Ascending aorta (tissue), 2 donors: ENCODE measurements at regions of chr6 and their contacts with region 1.

Region 1: DNA sequence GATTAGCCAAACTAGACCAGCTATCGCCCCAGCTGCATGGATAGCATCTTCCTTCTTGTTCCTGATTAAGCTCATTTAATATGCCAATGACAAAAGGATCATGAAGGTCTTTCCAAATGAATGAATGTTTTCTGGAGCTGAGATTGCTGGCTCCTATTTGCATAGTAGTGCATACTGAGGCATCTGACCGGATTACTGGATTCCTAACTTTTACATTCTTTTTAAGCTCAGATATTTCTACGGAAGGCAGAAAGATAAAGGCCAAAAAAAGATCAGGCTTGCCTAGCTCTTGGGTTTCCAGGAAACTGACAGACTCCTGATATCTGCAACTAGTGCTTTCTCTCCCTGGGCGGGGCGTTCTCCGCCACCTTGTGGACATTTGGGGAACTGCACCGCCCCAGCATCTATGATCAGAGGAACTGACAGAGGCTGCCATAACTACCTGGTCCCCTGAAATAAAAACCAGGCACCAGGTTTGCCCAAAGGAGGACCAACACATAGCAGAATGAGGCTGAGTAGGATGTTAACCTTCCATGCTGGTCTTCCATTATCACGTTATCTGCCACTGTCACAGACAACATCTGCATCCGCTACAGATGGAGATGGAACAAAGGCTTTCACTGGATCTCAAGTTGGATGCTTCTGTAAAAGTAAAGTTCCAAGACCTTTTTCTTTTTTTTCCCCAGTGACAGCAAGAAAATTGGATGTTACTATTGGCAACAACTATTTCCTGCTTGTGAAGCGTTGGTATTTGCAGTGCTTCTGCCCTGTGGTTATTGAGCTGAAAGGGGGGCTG is 33.2 kb downstream of the NT5E start:
- DNase-seq: peak; percentile 54 to 92
- H3K4me3 ChIP-seq: peak overlapping the region in 1 of 2 donors; percentile 8
- H3K27ac ChIP-seq: peak overlapping the region; percentile 23 to 65
- H3K4me1 ChIP-seq: peaks cover 0 to 2% of the 10 kb centered on the region in 2 donors
- H3K27me3 ChIP-seq: no peaks in the 10 kb centered on the region
- CTCF ChIP-seq: peak; percentile 91 to 100 (median 99)

Region 2: GRCh38 chr6:85354761-85355618 is 128.1 kb before region 1 on chr6:
- intact Hi-C with region 1: loop called (anchors 1 kb)
- DNase-seq: peak; percentile 13 to 87
- H3K4me3 ChIP-seq: no peak overlapping the region
- H3K27ac ChIP-seq: no peak overlapping the region
- H3K4me1 ChIP-seq: no peaks in the 10 kb centered on the region
- H3K27me3 ChIP-seq: no peaks in the 10 kb centered on the region
- CTCF ChIP-seq: peak; percentile 73 to 97 (median 96)

Region 3: DNA sequence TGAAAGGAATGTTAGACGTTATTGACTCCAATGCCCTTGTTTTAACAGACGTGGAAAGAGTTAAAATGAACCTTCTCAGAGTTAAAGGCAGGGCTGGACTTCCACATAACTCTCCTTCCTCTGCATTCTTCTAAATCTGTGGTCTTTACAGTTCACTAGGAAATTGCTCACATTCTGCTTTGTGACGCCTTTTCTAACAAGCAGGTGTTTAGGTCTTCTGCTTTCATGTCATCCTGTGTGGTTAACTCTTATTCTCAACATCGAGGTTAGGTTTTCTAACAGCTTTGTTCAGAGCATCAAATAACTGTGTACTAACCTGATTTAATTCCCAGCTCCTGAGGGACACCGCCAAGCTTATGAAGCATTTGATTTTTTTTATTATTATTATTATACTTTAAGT is 114.5 kb before region 1 on chr6:
- intact Hi-C with region 1: no loop called
- DNase-seq: no peak
- H3K4me3 ChIP-seq: no peak overlapping the region
- H3K27ac ChIP-seq: no peak overlapping the region
- H3K4me1 ChIP-seq: no peaks in the 10 kb centered on the region
- H3K27me3 ChIP-seq: no peaks in the 10 kb centered on the region
- CTCF ChIP-seq: no peak

Region 4: DNA sequence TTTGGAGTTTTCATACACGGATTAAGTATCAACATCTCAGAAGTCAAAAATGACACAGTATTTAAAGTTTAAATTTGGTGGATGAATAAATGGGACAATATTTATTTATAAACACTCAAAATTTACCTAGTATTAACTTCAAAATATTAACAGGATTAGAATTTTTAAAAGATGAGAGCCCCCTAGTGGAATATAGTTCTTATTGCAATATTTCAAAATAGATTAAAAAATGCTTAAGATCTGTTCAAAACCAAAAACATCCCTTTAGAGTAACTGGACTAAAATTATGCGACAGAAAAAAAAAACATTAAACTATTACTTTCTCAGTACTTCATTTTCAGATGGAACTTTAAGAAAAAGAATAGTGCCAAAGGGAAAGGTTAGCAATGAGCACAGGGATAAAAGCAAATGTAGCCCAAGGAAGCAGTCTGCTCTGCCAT is 54.0 kb after region 1 on chr6:
- intact Hi-C with region 1: loop called (anchors 5 kb)
- DNase-seq: no peak
- H3K4me3 ChIP-seq: no peak overlapping the region
- H3K27ac ChIP-seq: peak overlapping the region in 1 of 2 donors; percentile 56
- H3K4me1 ChIP-seq: peaks cover 0 to 10% of the 10 kb centered on the region in 2 donors
- H3K27me3 ChIP-seq: no peaks in the 10 kb centered on the region
- CTCF ChIP-seq: peak; percentile 17 to 60 (median 58)

Region 5: DNA sequence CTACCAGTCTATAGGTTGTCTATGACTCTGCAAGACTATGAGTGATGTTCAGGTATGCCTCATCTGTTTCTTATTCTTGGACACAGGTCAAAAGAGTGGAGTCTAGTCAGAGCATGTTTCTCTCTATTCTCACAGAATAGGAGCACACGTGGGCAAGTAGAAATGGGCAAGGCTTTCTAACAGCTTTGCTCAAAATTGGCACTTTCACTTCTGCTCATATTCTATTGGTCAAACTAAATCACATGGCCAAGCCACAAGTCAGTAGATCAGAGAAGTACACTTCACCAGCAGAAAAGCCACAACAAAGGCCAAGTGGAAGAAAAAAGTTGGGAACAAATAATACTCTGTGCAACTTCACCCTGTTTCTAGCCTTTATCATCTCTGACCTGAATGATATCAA is 514.1 kb after region 1 on chr6:
- intact Hi-C with region 1: no loop called
- DNase-seq: no peak
- H3K4me3 ChIP-seq: no peak overlapping the region
- H3K27ac ChIP-seq: no peak overlapping the region
- H3K4me1 ChIP-seq: no peaks in the 10 kb centered on the region
- H3K27me3 ChIP-seq: no peaks in the 10 kb centered on the region
- CTCF ChIP-seq: no peak

Region 6: DNA sequence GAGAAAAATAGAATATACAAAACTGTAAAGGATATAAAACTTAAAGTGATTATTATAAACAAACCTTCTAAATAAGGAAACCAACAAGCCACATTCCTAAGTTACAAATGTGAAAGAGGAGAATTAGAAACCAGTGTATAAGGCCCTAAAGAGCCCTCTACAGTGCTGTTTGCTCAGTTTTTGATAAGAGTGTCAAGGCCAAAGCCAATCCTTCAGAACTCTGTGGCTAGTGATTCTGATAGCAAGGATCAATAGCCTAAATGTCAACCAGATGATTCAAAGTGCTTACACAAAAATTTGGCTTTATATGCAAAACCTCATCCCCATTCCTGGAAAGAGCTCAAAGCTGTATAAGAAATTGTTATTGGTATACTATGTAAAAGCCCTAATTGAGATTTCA is 1349.6 kb after region 1 on chr6:
- intact Hi-C with region 1: no loop called
- DNase-seq: no peak
- H3K4me3 ChIP-seq: no peak overlapping the region
- H3K27ac ChIP-seq: no peak overlapping the region
- H3K4me1 ChIP-seq: no peaks in the 10 kb centered on the region
- H3K27me3 ChIP-seq: no peaks in the 10 kb centered on the region
- CTCF ChIP-seq: no peak